Activated T-helper 1 cell treated with anti-CD3 and anti-CD28 coated beads, Interleukin-12 subunit alpha, Interleukin-12 subunit beta, Interleukin-2, Interleukin-4 antibody, amounts not matched to agents 30 ng/mL and 10 ng/mL and 1 ng/mL, durations not matched to agents 14 hours and 24 hours and 36 hours (primary cell): ENCODE measurements at regions of chr9 and their contacts with region 1.

Region 1: DNA sequence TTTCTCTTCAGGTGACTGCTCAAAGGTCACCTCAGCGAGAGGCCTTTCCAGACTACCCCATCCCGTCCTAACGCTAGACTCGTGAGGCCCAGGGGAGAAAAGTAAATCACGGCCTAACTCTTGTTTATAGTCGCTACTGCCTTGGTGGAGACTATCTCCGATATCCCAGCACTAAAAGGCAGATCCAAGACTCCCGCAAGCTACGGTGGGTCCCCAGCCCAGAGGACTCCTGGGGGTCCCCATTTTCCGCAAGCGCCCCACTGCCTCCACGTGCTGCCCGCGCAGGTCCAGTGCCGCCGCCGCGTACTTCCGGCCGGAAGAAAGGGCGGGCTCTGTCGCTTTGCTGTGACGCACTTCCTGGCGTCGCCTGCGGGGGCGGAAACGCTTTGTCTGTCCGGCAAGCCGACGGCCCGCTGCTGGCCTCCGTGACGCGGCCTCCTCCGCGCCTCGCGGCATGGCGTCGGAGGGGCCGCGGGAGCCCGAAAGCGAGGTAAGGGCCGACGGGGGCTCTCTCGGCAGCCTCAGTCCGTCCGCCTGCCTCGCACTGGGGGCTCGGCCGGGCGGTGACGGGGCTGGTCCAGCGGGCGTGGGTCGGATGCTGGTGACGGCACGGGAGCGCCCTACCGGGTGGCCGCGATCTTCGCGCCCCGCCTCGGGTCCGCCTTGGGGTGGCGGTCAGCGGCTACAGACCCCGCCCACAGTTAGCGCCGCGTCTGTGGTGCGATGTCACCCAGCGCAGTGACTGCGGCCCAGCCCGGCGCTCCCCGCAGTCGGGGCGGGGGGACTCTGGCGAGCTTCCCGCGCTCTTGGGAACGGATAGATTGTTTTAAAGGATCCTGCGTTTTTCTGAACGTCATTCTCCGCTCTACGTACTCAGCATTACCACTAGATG is at the start of gene SECISBP2:
- DNase-seq: peak; percentile 93
- H3K4me3 Mint-ChIP-seq: peak within 1 kb of the TSS; percentile 90
- H3K27ac Mint-ChIP-seq: peak within 1 kb of the TSS; percentile 95
- H3K4me1 Mint-ChIP-seq: peaks cover 72% of the 10 kb centered on the region
- H3K27me3 Mint-ChIP-seq: no peaks in the 10 kb centered on the region
- total RNA-seq, gene SECISBP2: 49.4 and 54.9 TPM in 2 replicates

Region 2: DNA sequence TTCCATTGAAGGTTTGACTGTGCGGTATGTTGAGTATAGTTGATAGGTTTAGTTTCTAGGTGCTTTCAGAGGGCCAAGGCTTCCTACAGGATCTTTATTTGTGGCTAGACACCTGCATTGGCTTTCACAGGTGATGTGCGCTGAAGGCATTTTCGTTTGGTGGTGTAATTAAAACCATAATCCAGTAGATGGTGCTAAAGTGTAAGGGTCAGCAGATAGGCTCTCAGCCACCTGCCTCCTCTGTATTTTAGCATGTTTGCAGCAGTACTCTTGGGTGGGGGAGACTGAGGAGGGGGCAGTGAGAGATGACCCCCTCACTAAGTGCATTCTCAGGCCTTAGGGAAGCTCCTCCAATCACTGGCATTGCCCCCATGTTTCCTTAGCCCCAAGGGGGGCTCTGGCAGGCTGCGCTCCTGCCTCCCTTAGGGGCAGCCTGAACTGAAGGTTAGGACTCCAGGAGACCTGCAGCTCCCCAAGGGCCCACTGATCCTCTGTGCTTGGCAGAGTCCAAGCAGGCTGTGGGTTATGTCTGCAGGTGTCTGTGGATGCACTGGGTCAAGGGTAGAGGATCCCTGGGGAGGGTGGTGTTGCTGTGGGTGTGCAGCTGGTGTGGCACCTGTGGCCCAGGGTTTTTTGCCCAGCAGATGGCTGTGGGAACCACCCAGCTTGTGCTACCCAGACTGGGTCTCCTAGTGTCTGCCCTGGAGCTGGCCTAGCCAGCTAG is 1367.4 kb before region 1 on chr9:
- intact Hi-C with region 1: no loop called
- DNase-seq: no peak
- H3K4me3 Mint-ChIP-seq: no peak overlapping the region
- H3K27ac Mint-ChIP-seq: no peak overlapping the region
- H3K4me1 Mint-ChIP-seq: no peaks in the 10 kb centered on the region
- H3K27me3 Mint-ChIP-seq: peaks cover 18% of the 10 kb centered on the region

Region 3: GRCh38 chr9:89295400-89295799 is 23.0 kb before region 1 on chr9:
- intact Hi-C with region 1: no loop called
- DNase-seq: no peak
- H3K4me3 Mint-ChIP-seq: no peak overlapping the region
- H3K27ac Mint-ChIP-seq: no peak overlapping the region
- H3K4me1 Mint-ChIP-seq: no peaks in the 10 kb centered on the region
- H3K27me3 Mint-ChIP-seq: peaks cover 14% of the 10 kb centered on the region

Region 4: GRCh38 chr9:89340332-89340731 is 22.0 kb after region 1 on chr9:
- intact Hi-C with region 1: loop called (anchors 1 kb)
- DNase-seq: no peak
- H3K4me3 Mint-ChIP-seq: no peak overlapping the region
- H3K27ac Mint-ChIP-seq: peak overlapping the region; percentile 60
- H3K4me1 Mint-ChIP-seq: peaks cover 35% of the 10 kb centered on the region
- H3K27me3 Mint-ChIP-seq: no peaks in the 10 kb centered on the region

Region 5: GRCh38 chr9:89375191-89375760 is 56.9 kb after region 1 on chr9:
- intact Hi-C with region 1: loop called (anchors 2 kb)
- DNase-seq: peak; percentile 29
- H3K4me3 Mint-ChIP-seq: no peak overlapping the region
- H3K27ac Mint-ChIP-seq: peak overlapping the region; percentile 88
- H3K4me1 Mint-ChIP-seq: peaks cover 47% of the 10 kb centered on the region
- H3K27me3 Mint-ChIP-seq: no peaks in the 10 kb centered on the region

Region 6: DNA sequence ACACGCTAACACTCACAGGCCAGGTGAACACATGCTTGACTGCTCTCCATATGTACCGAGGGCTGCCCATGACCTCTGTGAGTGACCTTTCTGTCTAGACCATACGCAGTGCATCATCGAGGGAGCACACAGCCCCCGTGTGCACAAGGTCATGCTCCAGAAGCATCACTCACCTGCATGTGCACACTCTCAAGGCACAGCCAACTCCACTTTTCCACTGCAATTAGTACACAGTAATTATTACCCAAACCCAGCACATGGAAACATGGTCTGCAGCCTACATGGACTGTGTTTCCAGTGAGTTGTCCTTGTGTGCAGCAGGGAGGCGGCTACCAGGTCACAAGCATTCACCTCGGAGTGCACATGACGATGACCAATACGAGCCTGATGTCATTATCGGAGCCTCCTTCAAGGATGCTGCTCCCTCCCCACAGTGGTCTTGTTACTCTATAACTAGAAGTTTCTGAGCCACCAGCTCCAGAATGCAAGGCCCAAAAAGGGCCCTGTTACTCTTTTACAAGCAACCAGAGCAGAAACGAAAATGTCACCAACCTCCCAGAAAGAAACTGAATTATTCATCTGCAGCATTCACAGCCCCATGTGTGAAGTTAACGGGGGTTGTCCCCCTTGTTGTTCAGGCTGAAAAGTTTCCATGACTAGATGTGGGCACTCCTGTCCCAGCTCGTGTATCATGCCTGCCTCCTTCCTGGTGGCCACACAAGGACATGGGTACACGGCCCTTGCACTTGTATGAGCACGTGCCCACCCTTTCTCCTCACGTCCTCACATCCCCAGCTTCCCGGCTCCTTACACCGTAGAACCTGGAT is 148.3 kb after region 1 on chr9:
- intact Hi-C with region 1: loop called (anchors 2 kb)
- DNase-seq: peak; percentile 44
- H3K4me3 Mint-ChIP-seq: peak overlapping the region; percentile 73
- H3K27ac Mint-ChIP-seq: peak overlapping the region; percentile 98
- H3K4me1 Mint-ChIP-seq: peaks cover 93% of the 10 kb centered on the region
- H3K27me3 Mint-ChIP-seq: no peaks in the 10 kb centered on the region

Region 7: GRCh38 chr9:89549031-89549644 is 230.8 kb after region 1 on chr9:
- intact Hi-C with region 1: loop called (anchors 1 kb)
- DNase-seq: peak; percentile 73
- H3K4me3 Mint-ChIP-seq: no peak overlapping the region
- H3K27ac Mint-ChIP-seq: peak overlapping the region; percentile 29
- H3K4me1 Mint-ChIP-seq: peaks cover 30% of the 10 kb centered on the region
- H3K27me3 Mint-ChIP-seq: peaks cover 15% of the 10 kb centered on the region